GM13976 (cell line): ENCODE measurements at regions of chr17 and their contacts with region 1.

Region 1: GRCh38 chr17:43483674-43484372 is at the start of gene DHX8:
- DNase-seq: peak; percentile 94
- CTCF ChIP-seq: peak; percentile 100

Region 2: DNA sequence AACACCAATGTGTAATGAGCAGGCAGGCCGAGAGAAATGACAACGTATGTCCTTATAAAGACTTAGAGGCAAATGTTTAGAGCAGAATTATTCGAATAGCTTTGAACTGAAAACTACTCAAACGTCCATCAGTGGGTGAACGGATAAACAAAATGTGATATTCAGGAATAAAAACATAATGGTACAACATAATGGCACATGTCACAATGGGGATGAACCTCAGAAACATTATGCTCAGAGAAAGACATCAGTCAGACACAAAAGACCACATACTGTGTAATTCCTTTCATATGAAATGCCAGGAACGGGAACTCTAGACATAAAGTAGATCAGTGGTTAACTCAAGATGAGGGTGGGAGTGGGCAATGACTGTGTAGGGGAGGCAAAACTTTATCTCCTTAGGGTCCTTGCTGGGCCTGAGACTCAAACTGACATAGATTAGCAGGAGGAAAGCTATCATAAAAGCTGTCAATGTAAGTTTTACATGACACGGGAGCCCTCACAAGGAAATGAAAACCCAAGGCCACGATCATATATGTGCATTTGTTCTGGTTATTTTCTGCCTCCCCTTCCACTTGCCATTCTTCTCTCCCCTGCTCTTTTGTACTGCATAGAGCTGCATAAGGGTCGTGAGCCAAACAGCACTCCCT is 99.9 kb before region 1 on chr17:
- in situ Hi-C with region 1: no loop called
- DNase-seq: no peak
- CTCF ChIP-seq: no peak

Region 3: DNA sequence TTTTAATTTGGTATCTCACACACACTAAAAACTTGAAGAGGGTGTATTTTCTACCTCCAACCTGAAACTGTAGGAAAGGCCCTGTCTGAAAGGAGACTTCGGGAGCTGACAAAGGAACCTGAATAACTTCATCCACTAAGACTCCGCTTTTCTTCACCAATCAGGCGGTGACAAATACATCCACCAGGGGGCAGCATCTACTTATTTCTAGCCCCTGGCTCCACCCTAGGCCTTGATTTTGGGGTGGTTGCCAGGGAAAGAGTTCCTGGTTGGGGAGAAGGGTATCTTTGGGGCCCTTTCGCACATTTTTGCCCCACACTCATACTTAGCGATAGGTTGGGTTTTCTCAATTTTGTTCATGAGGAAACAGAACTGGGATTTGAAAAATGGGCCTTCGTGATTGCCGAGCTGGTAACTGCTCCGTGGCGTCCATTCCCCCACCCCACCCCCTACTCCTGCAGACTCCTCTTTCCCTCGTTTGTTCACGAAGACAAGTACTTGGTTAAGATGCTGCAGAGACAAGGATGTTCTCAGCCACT is 89.8 kb before region 1 on chr17:
- in situ Hi-C with region 1: loop called (anchors 10 kb)
- DNase-seq: peak; percentile 88
- CTCF ChIP-seq: peak; percentile 72

Region 4: DNA sequence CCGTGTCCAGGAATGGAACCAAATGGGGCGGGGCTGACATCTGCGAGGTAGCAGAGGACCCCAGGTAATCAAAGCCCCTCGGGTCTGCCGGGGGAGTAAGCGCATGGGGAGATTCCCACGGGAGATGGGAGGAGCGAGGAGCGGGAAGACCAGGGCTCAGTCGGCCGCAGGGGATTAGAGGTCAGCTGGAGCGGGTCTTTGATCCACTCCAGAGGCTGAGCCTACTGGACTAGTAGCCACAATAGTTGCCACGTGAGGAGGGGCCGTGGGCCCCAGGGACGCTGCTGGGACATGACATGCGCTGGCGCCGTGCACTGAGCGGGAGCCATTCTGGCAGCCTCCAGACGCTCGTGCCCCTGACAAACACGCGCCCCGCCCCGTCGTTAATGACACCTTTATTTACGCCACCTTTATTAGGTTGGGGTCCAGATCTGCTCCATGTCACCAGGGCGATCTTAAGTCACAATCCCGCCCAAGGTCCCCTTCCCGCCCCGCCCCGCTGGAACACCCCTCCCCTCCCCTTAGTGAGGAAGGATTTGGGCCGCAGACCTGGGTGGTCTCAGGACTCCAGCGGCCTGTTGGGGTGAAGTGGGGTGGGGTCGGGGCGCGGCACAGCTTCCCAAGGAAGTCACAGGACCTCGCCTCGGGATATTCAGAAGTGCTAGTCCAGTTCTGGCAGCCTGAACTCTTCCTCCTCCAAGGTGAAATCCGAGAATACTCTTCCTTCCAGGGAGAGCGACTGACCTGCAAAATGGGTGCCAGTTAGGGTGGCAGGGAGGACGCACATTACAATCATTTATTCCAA is 443.4 kb after region 1 on chr17:
- in situ Hi-C with region 1: no loop called
- DNase-seq: no peak
- CTCF ChIP-seq: no peak